Thyroid gland (tissue), 4 donors: ENCODE measurements at regions of chr12 and their contacts with region 1.

Region 1: GRCh38 chr12:15532364-15532977 is 210.2 kb downstream of the PTPRO start:
- DNase-seq: peak in 1 of 2 donors; percentile 26
- H3K4me3 ChIP-seq: no peak overlapping the region
- H3K27ac ChIP-seq: no peak overlapping the region
- H3K4me1 ChIP-seq: no peaks in the 10 kb centered on the region
- H3K27me3 ChIP-seq: no peaks in the 10 kb centered on the region
- CTCF ChIP-seq: peak in 4 of 6 experiments; percentile 37 to 64 (median 43)
- POLR2A ChIP-seq: no peak

Region 2: GRCh38 chr12:15059123-15059522 is 473.3 kb before region 1 on chr12:
- intact Hi-C with region 1: no loop called
- DNase-seq: no peak
- H3K4me3 ChIP-seq: no peak overlapping the region
- H3K27ac ChIP-seq: no peak overlapping the region
- H3K4me1 ChIP-seq: no peaks in the 10 kb centered on the region
- H3K27me3 ChIP-seq: no peaks in the 10 kb centered on the region
- CTCF ChIP-seq: no peak
- POLR2A ChIP-seq: no peak

Region 3: DNA sequence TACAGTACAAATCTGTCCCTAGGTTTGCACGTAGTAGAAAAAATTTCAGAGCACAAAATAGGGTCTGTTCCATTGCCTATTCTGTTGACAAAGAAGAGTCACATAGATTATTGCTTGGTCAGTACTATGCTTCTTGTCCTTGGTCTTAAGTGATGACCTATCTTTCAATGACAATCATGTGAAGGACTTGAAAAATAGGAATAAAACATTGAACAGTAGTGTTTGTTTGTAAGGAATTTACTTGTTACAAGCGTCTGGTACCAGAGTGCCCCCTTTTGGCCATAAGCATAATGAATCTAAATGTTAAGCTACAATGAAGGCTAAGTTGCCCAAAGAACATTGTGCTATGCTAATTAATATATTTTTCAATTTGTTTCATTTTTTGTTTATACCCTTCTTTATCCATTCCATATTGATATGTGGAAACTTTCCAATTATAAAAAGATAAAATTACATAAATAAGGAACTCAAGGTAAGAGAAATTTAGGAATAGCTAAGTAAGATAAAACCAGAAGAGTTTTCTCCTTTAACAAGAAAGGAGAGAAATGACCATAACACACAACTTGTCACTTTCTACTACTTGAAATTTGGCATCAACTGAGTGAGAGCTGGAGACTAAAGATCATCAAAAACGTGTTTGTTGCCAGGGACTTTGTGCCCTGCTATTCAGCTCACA is 52.0 kb after region 1 on chr12:
- intact Hi-C with region 1: loop called (anchors 10 kb)
- DNase-seq: peak in 1 of 2 donors; percentile 10
- H3K4me3 ChIP-seq: no peak overlapping the region
- H3K27ac ChIP-seq: no peak overlapping the region
- H3K4me1 ChIP-seq: no peaks in the 10 kb centered on the region
- H3K27me3 ChIP-seq: no peaks in the 10 kb centered on the region
- CTCF ChIP-seq: peak in 5 of 6 experiments; percentile 24 to 74 (median 54)
- POLR2A ChIP-seq: no peak